Activated CD8-positive, alpha-beta T cell treated with anti-CD3 and anti-CD28 coated beads for 36 hours (primary cell): ENCODE measurements at regions of chr16 and their contacts with region 1.

Region 1: GRCh38 chr16:85027349-85027957 is at the start of gene KIAA0513:
- DNase-seq: peak; percentile 95
- ATAC-seq: peak; percentile 64
- H3K4me3 Mint-ChIP-seq: peak within 1 kb of the TSS; percentile 85
- H3K27ac Mint-ChIP-seq: peak within 1 kb of the TSS; percentile 92
- H3K4me1 Mint-ChIP-seq: peaks cover 42% of the 10 kb centered on the region
- H3K27me3 Mint-ChIP-seq: no peaks in the 10 kb centered on the region
- CTCF ChIP-seq: no peak
- total RNA-seq, gene KIAA0513: 3.9 to 5.3 TPM

Region 2: DNA sequence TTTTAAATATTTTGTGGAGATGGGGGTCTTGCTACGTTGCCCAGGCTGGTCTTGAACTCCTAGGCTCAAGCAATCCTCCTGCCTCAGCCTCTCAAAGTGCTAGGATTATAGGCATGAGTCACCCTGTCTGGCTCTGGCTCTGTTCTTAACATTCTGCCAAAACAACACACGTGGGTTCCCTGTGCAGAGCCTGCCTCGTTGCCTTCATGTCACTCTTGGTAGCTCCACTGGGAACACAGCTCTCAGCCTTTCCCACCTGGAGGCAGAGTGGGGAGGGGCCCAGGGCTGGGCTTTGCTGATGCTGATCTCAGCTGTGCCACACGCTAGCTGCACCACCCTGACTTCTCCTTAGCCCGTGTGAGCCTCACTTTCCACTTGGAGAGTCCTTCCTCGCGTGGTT is 188.4 kb before region 1 on chr16:
- CTCF ChIA-PET with region 1: no interaction called
- POLR2A ChIA-PET with region 1: no interaction called
- intact Hi-C with region 1: no loop called
- DNase-seq: no peak
- ATAC-seq: no peak
- H3K4me3 Mint-ChIP-seq: no peak overlapping the region
- H3K27ac Mint-ChIP-seq: no peak overlapping the region
- H3K4me1 Mint-ChIP-seq: peaks cover 7% of the 10 kb centered on the region
- H3K27me3 Mint-ChIP-seq: peaks cover 21% of the 10 kb centered on the region
- CTCF ChIP-seq: no peak

Region 3: DNA sequence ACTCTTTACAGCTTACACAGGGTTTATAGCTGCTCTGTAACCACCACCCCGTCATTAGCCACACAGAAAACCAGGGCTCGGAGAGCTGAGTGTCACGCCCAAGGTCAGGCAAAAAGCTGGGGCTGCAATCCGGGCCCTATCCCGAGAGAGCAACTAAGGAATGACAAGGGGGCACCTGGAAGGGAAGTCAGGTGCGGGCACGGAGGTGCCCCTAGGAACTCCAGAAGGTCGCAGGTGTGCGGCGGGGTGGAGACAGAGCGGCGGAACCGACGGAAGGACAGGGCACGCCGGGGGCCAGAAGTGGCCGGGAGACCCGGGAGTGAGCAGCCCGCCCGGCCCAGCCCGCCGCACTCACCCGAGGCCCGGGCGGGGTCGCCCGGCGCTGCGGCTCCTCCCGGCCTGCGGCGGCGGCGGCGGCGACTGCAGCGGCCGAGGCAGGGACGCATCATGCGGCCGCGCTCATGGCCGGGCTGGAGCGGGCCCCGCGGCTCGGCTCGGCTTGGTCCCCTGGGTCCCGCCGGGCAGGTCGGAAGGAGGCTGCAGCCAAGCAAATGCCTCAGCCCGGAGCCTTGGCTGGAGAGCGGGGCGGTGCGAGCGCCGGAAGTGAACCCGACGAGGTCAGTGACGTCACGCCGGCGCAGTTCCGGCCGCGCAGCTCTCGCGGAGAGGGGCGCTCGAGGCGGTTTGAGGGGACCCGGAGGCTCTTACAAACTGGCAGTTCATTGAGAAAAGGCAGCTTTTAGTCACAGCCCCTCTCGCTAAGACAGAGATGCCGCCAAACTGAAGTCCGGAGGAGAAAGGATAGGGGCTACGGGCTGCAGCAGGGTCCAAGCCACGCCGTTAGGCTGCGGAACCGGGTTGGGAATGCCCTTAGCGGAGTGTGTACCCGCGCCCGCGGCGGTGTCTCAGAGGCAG is 16.3 kb before region 1 on chr16 and contains the start of gene ZDHHC7:
- CTCF ChIA-PET with region 1: interaction called, 23 read pairs
- POLR2A ChIA-PET with region 1: interaction called, 6 read pairs
- intact Hi-C with region 1: loop called (anchors 1 kb)
- DNase-seq: peak; percentile 89
- ATAC-seq: peak; percentile 97
- H3K4me3 Mint-ChIP-seq: peak within 1 kb of the TSS; percentile 96
- H3K27ac Mint-ChIP-seq: peak within 1 kb of the TSS; percentile 97
- H3K4me1 Mint-ChIP-seq: peaks cover 32% of the 10 kb centered on the region
- H3K27me3 Mint-ChIP-seq: no peaks in the 10 kb centered on the region
- CTCF ChIP-seq: no peak
- total RNA-seq, gene ZDHHC7: 20.7 to 23.6 TPM

Region 4: GRCh38 chr16:85055503-85056210 is 28.2 kb after region 1 on chr16:
- CTCF ChIA-PET with region 1: interaction called, 4 read pairs
- POLR2A ChIA-PET with region 1: interaction called, 7 read pairs
- intact Hi-C with region 1: loop called (anchors 1 kb)
- DNase-seq: peak; percentile 94
- ATAC-seq: peak; percentile 91
- H3K4me3 Mint-ChIP-seq: peak overlapping the region; percentile 72
- H3K27ac Mint-ChIP-seq: peak overlapping the region; percentile 91
- H3K4me1 Mint-ChIP-seq: peaks cover 45% of the 10 kb centered on the region
- H3K27me3 Mint-ChIP-seq: no peaks in the 10 kb centered on the region
- CTCF ChIP-seq: no peak